Ascending aorta (tissue), 2 donors: ENCODE measurements at regions of chr10 and their contacts with region 1.

Region 1: GRCh38 chr10:683448-684071 is 5.9 kb downstream of the DIP2C start:
- DNase-seq: peak; percentile 27 to 89
- H3K4me3 ChIP-seq: peak overlapping the region; percentile 48 to 55
- H3K27ac ChIP-seq: peak overlapping the region; percentile 72 to 88
- H3K4me1 ChIP-seq: peaks cover 6 to 26% of the 10 kb centered on the region in 2 donors
- H3K27me3 ChIP-seq: no peaks in the 10 kb centered on the region
- CTCF ChIP-seq: peak in 2 of 3 experiments; percentile 15 to 20

Region 2: GRCh38 chr10:520406-520795 is 163.2 kb before region 1 on chr10:
- intact Hi-C with region 1: no loop called
- DNase-seq: peak in 1 of 2 donors; percentile 50
- H3K4me3 ChIP-seq: no peak overlapping the region
- H3K27ac ChIP-seq: no peak overlapping the region
- H3K4me1 ChIP-seq: peaks cover 0 to 2% of the 10 kb centered on the region in 2 donors
- H3K27me3 ChIP-seq: no peaks in the 10 kb centered on the region
- CTCF ChIP-seq: no peak

Region 3: DNA sequence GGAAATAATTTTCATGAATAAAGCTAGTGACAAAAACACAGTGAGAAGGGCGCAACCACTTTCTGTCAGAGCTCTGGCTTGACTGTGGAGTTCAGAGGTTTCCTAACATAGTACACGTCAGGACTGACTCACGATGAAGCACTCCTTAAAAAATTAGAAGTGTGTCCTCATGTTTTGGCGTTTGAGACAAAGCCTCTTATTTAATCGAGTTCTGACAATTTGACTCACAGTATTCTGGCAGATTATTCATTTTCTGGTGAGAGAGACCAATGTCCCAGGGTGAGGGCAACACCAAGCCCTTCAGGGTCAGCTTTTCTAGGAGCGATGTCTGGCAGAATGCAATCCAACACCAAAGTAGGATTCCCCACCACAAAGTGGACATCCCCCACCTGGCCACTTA is 102.8 kb before region 1 on chr10:
- intact Hi-C with region 1: loop called (anchors 2 kb)
- DNase-seq: peak in 1 of 2 donors; percentile 80
- H3K4me3 ChIP-seq: no peak overlapping the region
- H3K27ac ChIP-seq: peak overlapping the region; percentile 56 to 62
- H3K4me1 ChIP-seq: peaks cover 0 to 18% of the 10 kb centered on the region in 2 donors
- H3K27me3 ChIP-seq: no peaks in the 10 kb centered on the region
- CTCF ChIP-seq: no peak

Region 4: GRCh38 chr10:665579-666091 is 17.9 kb before region 1 on chr10:
- intact Hi-C with region 1: loop called (anchors 2 kb)
- DNase-seq: peak in 1 of 2 donors; percentile 80
- H3K4me3 ChIP-seq: peak overlapping the region; percentile 39 to 62
- H3K27ac ChIP-seq: peak overlapping the region; percentile 61 to 65
- H3K4me1 ChIP-seq: peaks cover 0 to 21% of the 10 kb centered on the region in 2 donors
- H3K27me3 ChIP-seq: no peaks in the 10 kb centered on the region
- CTCF ChIP-seq: no peak